Calu3 (cell line): ENCODE measurements at regions of chr4 and their contacts with region 1.

Region 1: GRCh38 chr4:88792268-88792781 is 94.7 kb upstream of the NAP1L5 start:
- DNase-seq: peak; percentile 14
- H3K4me3 Mint-ChIP-seq: no peak overlapping the region
- H3K27ac Mint-ChIP-seq: peak overlapping the region; percentile 43
- H3K4me1 Mint-ChIP-seq: peaks cover 29% of the 10 kb centered on the region
- H3K27me3 Mint-ChIP-seq: no peaks in the 10 kb centered on the region
- CTCF ChIP-seq: no peak

Region 2: DNA sequence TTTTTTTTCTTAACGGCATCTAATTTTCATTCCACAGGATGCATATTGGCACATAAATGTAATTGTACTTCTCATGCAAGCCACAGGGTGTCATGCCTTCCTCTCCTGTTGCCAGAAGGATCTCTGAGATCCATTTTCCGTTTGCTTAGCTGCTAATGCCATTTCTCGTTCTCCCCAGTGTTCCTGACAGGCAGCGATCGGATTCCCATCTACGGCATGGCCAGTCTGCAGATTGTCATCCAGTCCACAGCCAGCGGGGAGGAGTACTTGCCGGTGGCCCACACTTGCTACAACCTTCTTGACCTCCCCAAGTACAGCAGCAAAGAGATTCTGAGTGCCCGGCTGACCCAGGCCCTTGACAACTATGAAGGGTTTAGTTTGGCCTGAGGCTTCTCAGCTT is 85.8 kb before region 1 on chr4:
- CTCF ChIA-PET with region 1: interaction called, 3 read pairs
- intact Hi-C with region 1: loop called (anchors 1 kb)
- DNase-seq: no peak
- H3K4me3 Mint-ChIP-seq: no peak overlapping the region
- H3K27ac Mint-ChIP-seq: no peak overlapping the region
- H3K4me1 Mint-ChIP-seq: no peaks in the 10 kb centered on the region
- H3K27me3 Mint-ChIP-seq: no peaks in the 10 kb centered on the region
- CTCF ChIP-seq: no peak

Region 3: DNA sequence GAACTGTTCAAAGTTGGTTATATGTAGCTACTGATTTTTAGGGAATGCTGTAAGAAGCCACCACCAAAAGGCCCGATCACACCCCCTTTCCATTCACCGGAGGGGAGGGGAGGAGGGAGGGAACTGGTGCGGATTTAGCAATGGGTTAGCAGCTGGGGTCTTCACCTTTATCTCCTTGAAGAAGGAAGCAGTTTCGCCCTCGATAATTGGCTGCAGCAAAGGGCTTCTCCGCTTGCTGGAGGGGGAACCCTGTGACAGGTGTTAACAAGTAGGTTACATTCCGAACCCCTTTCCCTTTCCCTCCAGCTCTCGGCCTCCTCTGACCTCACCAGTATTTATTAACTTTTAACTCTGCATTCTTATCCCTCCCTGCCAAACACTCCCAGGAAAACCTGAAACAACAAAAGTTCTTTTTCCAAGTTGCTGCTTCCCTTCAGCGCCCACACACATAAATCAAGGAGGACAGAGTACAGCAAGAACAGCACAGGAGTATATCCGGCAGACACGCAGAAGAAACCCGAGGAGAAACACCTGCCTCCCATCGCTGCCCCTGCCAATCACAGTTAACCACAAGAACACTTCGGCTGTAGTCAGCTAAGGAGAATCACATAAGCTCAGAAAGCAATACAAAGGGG is 54.9 kb before region 1 on chr4:
- CTCF ChIA-PET with region 1: no interaction called
- intact Hi-C with region 1: loop called (anchors 5 kb)
- DNase-seq: peak; percentile 28
- H3K4me3 Mint-ChIP-seq: peak overlapping the region; percentile 10
- H3K27ac Mint-ChIP-seq: no peak overlapping the region
- H3K4me1 Mint-ChIP-seq: peaks cover 5% of the 10 kb centered on the region
- H3K27me3 Mint-ChIP-seq: no peaks in the 10 kb centered on the region
- CTCF ChIP-seq: no peak

Region 4: GRCh38 chr4:88759039-88759894 is 33.1 kb before region 1 on chr4:
- CTCF ChIA-PET with region 1: interaction called, 9 read pairs
- intact Hi-C with region 1: loop called (anchors 5 kb)
- DNase-seq: no peak
- H3K4me3 Mint-ChIP-seq: no peak overlapping the region
- H3K27ac Mint-ChIP-seq: no peak overlapping the region
- H3K4me1 Mint-ChIP-seq: peaks cover 31% of the 10 kb centered on the region
- H3K27me3 Mint-ChIP-seq: no peaks in the 10 kb centered on the region
- CTCF ChIP-seq: no peak